ENCODE measurements at regions of chr13 and their contacts with region 1.

Region 1: GRCh38 chr13:40102856-40103255 is 447.4 kb downstream of the COG6 start:
- DNase-seq: no peak
- H3K4me3 Mint-ChIP-seq: peak overlapping the region; percentile 60
- H3K27ac Mint-ChIP-seq: peak overlapping the region; percentile 96
- H3K4me1 Mint-ChIP-seq: peaks cover 47% of the 10 kb centered on the region
- H3K27me3 Mint-ChIP-seq: no peaks in the 10 kb centered on the region

Region 2: GRCh38 chr13:39952249-39953233 is 150.3 kb before region 1 on chr13:
- intact Hi-C with region 1: loop called (anchors 5 kb)
- DNase-seq: no peak
- H3K4me3 Mint-ChIP-seq: no peak overlapping the region
- H3K27ac Mint-ChIP-seq: peak overlapping the region; percentile 6
- H3K4me1 Mint-ChIP-seq: peaks cover 42% of the 10 kb centered on the region
- H3K27me3 Mint-ChIP-seq: peaks cover 6% of the 10 kb centered on the region

Region 3: DNA sequence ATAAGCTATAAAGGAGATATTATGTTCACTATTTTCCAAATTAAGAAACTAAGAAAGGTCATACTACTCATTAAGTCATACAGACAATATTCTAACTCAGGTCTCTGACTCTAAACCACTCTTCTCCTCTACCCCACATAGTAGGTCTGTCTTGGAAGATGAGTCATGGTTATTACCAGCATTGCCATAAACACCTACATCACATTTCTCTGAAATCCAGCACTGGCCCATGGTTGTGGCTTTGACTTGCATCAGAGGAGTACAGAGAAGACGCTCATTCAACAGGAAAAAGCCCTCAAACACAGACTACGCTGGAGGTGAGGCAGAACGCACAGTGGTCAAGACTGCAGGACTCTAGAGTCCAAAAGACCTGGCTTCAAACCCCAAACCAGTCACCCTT is 29.4 kb after region 1 on chr13:
- intact Hi-C with region 1: loop called (anchors 2 kb)
- DNase-seq: no peak
- H3K4me3 Mint-ChIP-seq: no peak overlapping the region
- H3K27ac Mint-ChIP-seq: peak overlapping the region; percentile 29
- H3K4me1 Mint-ChIP-seq: peaks cover 21% of the 10 kb centered on the region
- H3K27me3 Mint-ChIP-seq: no peaks in the 10 kb centered on the region

Region 4: DNA sequence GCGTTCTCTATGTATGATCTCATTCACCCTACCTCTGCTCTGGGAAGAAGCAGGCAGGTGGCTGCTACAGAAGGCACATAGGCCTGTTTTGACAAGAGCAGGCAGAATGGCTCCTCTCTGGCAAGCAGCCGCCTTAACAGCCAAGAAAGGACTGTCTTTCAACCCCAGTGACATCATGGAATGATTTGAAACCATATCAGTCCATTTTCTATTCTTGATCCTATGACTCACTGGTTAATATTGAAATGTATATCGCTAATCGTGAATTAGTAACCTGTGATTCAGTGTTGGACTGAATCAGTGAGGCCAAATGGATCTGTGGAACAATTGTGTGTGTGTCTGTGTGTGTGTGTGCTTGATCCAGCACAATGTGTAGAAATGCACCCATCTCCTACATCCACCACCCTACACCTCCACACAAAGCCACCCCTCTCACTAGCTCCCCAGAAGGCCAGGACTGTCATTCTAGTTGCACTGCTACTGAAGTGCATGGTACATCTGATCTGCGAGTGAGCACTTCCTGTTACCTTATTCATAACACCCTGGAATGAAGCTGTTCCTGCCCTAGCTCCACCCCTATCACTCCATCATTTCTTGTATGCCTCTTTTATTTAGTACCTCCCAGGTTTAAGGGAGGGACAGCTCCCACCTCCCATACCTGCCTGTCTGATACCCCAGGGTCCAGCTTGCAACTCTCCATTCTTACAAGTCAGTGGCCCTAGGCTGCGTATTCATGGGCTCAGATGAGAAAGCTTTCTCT is 103.6 kb after region 1 on chr13:
- intact Hi-C with region 1: loop called (anchors 2 kb)
- DNase-seq: no peak
- H3K4me3 Mint-ChIP-seq: peak overlapping the region; percentile 37
- H3K27ac Mint-ChIP-seq: peak overlapping the region; percentile 97
- H3K4me1 Mint-ChIP-seq: peaks cover 20% of the 10 kb centered on the region
- H3K27me3 Mint-ChIP-seq: no peaks in the 10 kb centered on the region

Region 5: DNA sequence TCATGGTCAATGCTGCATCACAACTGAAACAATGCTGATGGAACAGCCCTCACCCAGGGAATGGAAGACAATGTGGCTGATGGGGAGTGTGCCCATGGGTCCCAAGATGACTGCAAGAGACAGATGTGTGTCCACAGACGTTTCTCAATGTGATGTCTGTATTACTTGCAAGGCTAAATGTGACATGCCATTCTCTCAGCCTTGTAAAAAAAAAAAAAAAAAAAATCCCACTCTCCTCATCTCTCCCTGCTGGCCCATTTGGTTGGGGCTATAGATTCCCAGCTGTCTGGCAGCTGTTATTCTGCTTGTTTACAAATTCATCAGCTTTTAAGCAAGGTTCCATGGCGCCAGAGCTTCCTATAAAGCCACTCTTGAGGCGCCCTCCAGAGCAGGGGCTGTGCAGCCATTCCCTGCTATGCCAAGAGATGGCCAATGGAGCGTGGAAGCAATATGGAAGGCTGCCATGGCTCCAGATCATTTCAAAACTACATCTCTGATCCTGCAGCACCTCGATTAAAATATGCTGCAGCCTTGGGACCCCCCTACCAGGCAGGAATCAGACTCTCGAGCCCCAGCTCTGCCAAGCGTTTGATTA is 268.8 kb after region 1 on chr13:
- intact Hi-C with region 1: loop called (anchors 5 kb)
- DNase-seq: no peak
- H3K4me3 Mint-ChIP-seq: no peak overlapping the region
- H3K27ac Mint-ChIP-seq: no peak overlapping the region
- H3K4me1 Mint-ChIP-seq: peaks cover 34% of the 10 kb centered on the region
- H3K27me3 Mint-ChIP-seq: no peaks in the 10 kb centered on the region

Region 6: GRCh38 chr13:40613192-40613818 is 510.4 kb after region 1 on chr13:
- intact Hi-C with region 1: loop called (anchors 1 kb)
- DNase-seq: peak; percentile 55
- H3K4me3 Mint-ChIP-seq: peak overlapping the region; percentile 80
- H3K27ac Mint-ChIP-seq: peak overlapping the region; percentile 95
- H3K4me1 Mint-ChIP-seq: peaks cover 64% of the 10 kb centered on the region
- H3K27me3 Mint-ChIP-seq: no peaks in the 10 kb centered on the region

Measured in activated T-helper 2 cell treated with anti-CD3 and anti-CD28 coated beads, Interferon-gamma antibody, Interleukin-2, Interleukin-4, amounts not matched to agents 10 μg/mL and 5 μg/mL and 100 μg/mL, durations not matched to agents 14 hours and 24 hours and 36 hours (primary cell).